Vagina (tissue), 2 donors: ENCODE measurements at regions of chr15 and their contacts with region 1.

Region 1: DNA sequence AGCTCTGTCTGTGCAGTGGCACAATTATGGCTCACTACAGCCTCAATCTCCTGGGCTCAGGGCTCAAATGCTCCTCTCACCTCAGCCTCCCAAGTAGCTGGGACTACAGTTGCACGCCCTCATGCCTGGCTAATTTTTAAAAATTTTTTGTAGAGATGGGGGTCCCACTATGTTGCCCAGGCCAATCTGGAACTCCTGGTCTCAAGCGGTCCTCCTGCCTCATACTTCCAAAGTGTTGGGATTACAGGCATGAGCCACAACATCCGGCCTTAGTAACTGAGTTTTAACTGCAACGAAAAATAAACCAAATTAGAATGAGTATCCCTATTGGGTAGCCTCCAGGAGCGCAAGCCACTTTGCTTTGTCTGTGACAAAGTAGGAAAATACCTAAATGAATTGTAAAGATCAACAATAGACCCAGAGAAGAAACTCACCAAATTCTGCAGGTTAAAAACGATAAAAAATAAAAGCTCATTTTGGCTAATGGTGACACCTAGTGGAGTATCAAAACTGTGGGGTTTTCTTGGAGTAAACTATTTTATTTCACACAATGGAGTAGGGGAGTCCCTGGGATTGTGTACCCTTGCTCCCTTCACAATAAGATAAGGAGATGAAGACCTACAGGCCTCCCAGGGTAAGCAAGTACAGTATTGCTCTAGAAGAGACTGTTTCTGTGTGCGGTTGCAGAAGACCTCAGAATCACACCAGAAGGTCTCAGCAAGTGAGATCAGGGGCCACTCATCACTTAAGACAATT is 21.0 kb upstream of the CA12 start:
- DNase-seq: no peak
- H3K4me3 ChIP-seq: no peak overlapping the region
- H3K27ac ChIP-seq: no peak overlapping the region
- H3K4me1 ChIP-seq: no peaks in the 10 kb centered on the region
- H3K27me3 ChIP-seq: no peaks in the 10 kb centered on the region
- CTCF ChIP-seq: peak; percentile 56 to 71 (median 68)
- POLR2A ChIP-seq: no peak

Region 2: GRCh38 chr15:63019539-63020109 is 383.1 kb before region 1 on chr15:
- intact Hi-C with region 1: no loop called
- DNase-seq: no peak
- H3K4me3 ChIP-seq: no peak overlapping the region
- H3K27ac ChIP-seq: no peak overlapping the region
- H3K4me1 ChIP-seq: peaks cover 14% of the 10 kb centered on the region
- H3K27me3 ChIP-seq: no peaks in the 10 kb centered on the region
- CTCF ChIP-seq: no peak
- POLR2A ChIP-seq: no peak

Region 3: GRCh38 chr15:63051156-63052066 is 351.3 kb before region 1 on chr15:
- intact Hi-C with region 1: loop called (anchors 10 kb)
- DNase-seq: no peak
- H3K4me3 ChIP-seq: peak overlapping the region in 1 of 2 donors; percentile 27
- H3K27ac ChIP-seq: peak overlapping the region; percentile 65
- H3K4me1 ChIP-seq: peaks cover 73% of the 10 kb centered on the region
- H3K27me3 ChIP-seq: no peaks in the 10 kb centered on the region
- CTCF ChIP-seq: no peak
- POLR2A ChIP-seq: no peak

Region 4: DNA sequence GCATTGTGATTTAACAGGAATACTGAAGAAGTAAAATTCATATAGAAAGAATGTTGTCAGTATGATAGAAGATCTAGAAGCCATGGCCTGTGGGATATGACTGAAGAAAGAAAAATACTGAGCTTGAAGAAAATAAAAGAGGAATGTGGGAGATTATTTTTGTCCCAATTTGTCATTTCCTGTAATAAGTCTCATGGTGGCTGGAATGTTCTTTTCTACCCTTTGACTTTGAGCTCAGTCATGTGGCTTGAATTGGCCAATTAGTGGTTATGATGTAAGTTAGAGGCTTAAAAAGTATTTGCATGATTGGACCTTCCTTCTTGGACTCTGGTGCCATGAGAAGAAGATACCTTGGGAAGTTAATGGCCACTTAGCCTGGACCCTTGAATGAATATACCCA is 111.2 kb before region 1 on chr15:
- intact Hi-C with region 1: loop called (anchors 5 kb)
- DNase-seq: no peak
- H3K4me3 ChIP-seq: no peak overlapping the region
- H3K27ac ChIP-seq: no peak overlapping the region
- H3K4me1 ChIP-seq: peaks cover 10% of the 10 kb centered on the region
- H3K27me3 ChIP-seq: no peaks in the 10 kb centered on the region
- CTCF ChIP-seq: no peak
- POLR2A ChIP-seq: no peak

Region 5: GRCh38 chr15:63805993-63806980 is 403.6 kb after region 1 on chr15:
- intact Hi-C with region 1: no loop called
- DNase-seq: no peak
- H3K4me3 ChIP-seq: no peak overlapping the region
- H3K27ac ChIP-seq: no peak overlapping the region
- H3K4me1 ChIP-seq: peaks cover 47% of the 10 kb centered on the region
- H3K27me3 ChIP-seq: no peaks in the 10 kb centered on the region
- CTCF ChIP-seq: no peak
- POLR2A ChIP-seq: no peak